ENCODE measurements at regions of chr1 and their contacts with region 1.

Region 1: DNA sequence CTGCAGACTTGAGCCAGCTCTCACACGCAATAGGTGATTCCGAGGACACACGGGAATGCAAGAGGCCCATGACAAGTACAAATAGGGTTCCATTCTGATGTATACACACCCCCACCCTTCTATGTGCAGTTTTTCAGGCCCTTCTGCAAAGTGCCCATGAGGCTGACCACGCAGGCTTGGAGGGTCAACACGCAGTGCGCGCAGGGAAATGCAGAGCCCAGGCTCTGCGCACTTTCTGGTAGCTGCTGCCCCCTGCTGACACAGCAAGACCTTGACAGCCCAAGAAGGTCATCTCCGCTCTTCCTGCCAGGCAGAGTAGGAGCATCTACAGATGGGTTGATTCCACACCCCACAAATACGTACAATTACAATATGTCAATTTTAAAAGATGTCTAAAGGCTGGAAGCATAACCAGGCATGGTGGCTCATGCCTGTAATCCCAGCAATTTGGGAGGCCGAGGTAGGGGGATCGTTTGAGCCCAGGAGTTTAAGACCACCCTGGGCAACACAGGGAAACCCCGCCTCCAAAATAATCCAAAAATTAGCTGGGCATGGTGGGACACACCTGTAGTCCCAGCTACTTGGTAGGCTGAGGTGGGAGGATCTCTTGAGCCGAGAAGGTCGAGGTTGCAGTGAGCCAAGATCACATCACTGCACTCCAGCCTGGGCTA is 18.5 kb downstream of the SH3BP5L start:
- DNase-seq: peak; percentile 29 to 64 (median 50)
- ATAC-seq: peak; percentile 75
- H3K4me3 ChIP-seq: no peak overlapping the region
- H3K4me3 Mint-ChIP-seq: no peak overlapping the region
- H3K27ac ChIP-seq: no peak overlapping the region
- H3K27ac Mint-ChIP-seq: peak overlapping the region in 5 of 9 donors; percentile 17 to 58 (median 29)
- H3K4me1 ChIP-seq: no peaks in the 10 kb centered on the region
- H3K4me1 Mint-ChIP-seq: peaks cover 7 to 23% (median 20%) of the 10 kb centered on the region in 7 donors
- H3K27me3 ChIP-seq: no peaks in the 10 kb centered on the region
- H3K27me3 Mint-ChIP-seq: peaks cover 0 to 9% (median 6%) of the 10 kb centered on the region in 5 donors

Region 2: GRCh38 chr1:247681288-247681897 is 1125.8 kb before region 1 on chr1:
- CTCF ChIA-PET with region 1: interaction called, 3 read pairs
- POLR2A ChIA-PET with region 1: no interaction called
- intact Hi-C with region 1: loop called in 1 of 2 experiments (anchors 5 kb)
- DNase-seq: peak in 6 of 9 donors; percentile 1 to 13 (median 10)
- ATAC-seq: no peak
- H3K4me3 ChIP-seq: no peak overlapping the region
- H3K4me3 Mint-ChIP-seq: no peak overlapping the region
- H3K27ac ChIP-seq: no peak overlapping the region
- H3K27ac Mint-ChIP-seq: no peak overlapping the region
- H3K4me1 ChIP-seq: no peaks in the 10 kb centered on the region
- H3K4me1 Mint-ChIP-seq: peaks cover 0 to 3% (median 0%) of the 10 kb centered on the region in 7 donors
- H3K27me3 ChIP-seq: no peaks in the 10 kb centered on the region
- H3K27me3 Mint-ChIP-seq: peaks cover 0 to 12% (median 7%) of the 10 kb centered on the region in 5 donors

Region 3: GRCh38 chr1:247936415-247936814 is 870.8 kb before region 1 on chr1:
- CTCF ChIA-PET with region 1: no interaction called
- POLR2A ChIA-PET with region 1: no interaction called
- intact Hi-C with region 1: loop called in 1 of 2 experiments (anchors 1 kb)
- DNase-seq: no peak
- ATAC-seq: no peak
- H3K4me3 ChIP-seq: no peak overlapping the region
- H3K4me3 Mint-ChIP-seq: peak overlapping the region in 3 of 10 donors; percentile 5 to 88 (median 43)
- H3K27ac ChIP-seq: no peak overlapping the region
- H3K27ac Mint-ChIP-seq: peak overlapping the region in 1 of 9 donors; percentile 41
- H3K4me1 ChIP-seq: no peaks in the 10 kb centered on the region
- H3K4me1 Mint-ChIP-seq: peaks cover 0 to 15% (median 0%) of the 10 kb centered on the region in 7 donors
- H3K27me3 ChIP-seq: no peaks in the 10 kb centered on the region
- H3K27me3 Mint-ChIP-seq: peaks cover 0 to 6% (median 2%) of the 10 kb centered on the region in 5 donors

Region 4: GRCh38 chr1:248404024-248404423 is 403.2 kb before region 1 on chr1:
- CTCF ChIA-PET with region 1: interaction called, 8 read pairs
- POLR2A ChIA-PET with region 1: no interaction called
- intact Hi-C with region 1: loop called (anchors 1 to 2 kb)
- DNase-seq: peak in 3 of 9 donors; percentile 6 to 32 (median 8)
- ATAC-seq: peak; percentile 91
- H3K4me3 ChIP-seq: no peak overlapping the region
- H3K4me3 Mint-ChIP-seq: no peak overlapping the region
- H3K27ac ChIP-seq: no peak overlapping the region
- H3K27ac Mint-ChIP-seq: peak overlapping the region in 4 of 9 donors; percentile 0 to 5 (median 0)
- H3K4me1 ChIP-seq: no peaks in the 10 kb centered on the region
- H3K4me1 Mint-ChIP-seq: peaks cover 0 to 16% (median 4%) of the 10 kb centered on the region in 7 donors
- H3K27me3 ChIP-seq: no peaks in the 10 kb centered on the region
- H3K27me3 Mint-ChIP-seq: no peaks in the 10 kb centered on the region

Region 5: DNA sequence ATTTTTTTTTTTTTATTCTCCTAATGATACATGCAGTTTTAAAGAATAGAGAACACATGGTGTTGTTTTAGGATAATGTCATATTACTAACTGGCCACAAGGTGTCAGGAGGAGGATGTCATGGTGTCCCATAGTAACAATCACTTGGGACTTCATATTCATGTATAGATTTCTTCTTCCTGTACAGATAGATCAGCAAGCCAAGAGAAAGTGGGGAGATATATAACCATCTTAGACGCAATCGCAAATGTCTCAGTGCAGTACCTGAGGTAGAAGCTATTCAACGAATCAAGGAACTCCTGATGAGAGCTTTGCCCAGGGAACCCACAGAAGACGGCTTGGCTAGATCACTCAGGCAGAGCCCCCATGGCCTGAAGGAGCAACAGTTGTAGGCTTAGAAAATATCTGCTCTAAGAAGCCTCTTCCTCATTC is 184.6 kb before region 1 on chr1:
- CTCF ChIA-PET with region 1: interaction called, 11 read pairs
- POLR2A ChIA-PET with region 1: no interaction called
- intact Hi-C with region 1: loop called (anchors 1 kb)
- DNase-seq: peak in 6 of 9 donors; percentile 9 to 35 (median 24)
- ATAC-seq: peak; percentile 87
- H3K4me3 ChIP-seq: no peak overlapping the region
- H3K4me3 Mint-ChIP-seq: no peak overlapping the region
- H3K27ac ChIP-seq: no peak overlapping the region
- H3K27ac Mint-ChIP-seq: peak overlapping the region in 1 of 9 donors; percentile 56
- H3K4me1 ChIP-seq: peaks cover 0 to 6% of the 10 kb centered on the region in 2 donors
- H3K4me1 Mint-ChIP-seq: peaks cover 1 to 13% (median 7%) of the 10 kb centered on the region in 7 donors
- H3K27me3 ChIP-seq: no peaks in the 10 kb centered on the region
- H3K27me3 Mint-ChIP-seq: peaks cover 0 to 3% (median 0%) of the 10 kb centered on the region in 5 donors

Region 6: DNA sequence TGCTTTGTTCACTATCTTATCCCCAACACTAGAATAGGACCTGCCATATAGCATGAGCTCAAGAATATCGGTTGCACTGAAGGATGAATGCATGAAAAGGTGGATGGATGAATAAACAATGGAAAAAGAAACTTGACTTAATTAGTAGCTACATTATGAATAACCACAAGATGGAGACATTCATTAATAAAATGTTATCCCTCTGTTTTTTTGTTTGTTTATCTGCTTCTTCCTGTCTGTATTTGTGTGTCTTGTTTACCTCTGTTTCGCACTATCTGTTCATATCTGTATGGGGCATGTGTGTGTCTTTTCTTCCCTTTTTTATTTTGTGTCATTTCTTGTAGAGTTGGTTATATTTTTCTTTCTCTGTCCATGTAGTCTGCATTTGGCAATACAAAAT is 103.5 kb before region 1 on chr1:
- CTCF ChIA-PET with region 1: no interaction called
- POLR2A ChIA-PET with region 1: no interaction called
- intact Hi-C with region 1: loop called in 1 of 2 experiments (anchors 1 kb)
- DNase-seq: no peak
- ATAC-seq: no peak
- H3K4me3 ChIP-seq: no peak overlapping the region
- H3K4me3 Mint-ChIP-seq: no peak overlapping the region
- H3K27ac ChIP-seq: no peak overlapping the region
- H3K27ac Mint-ChIP-seq: no peak overlapping the region
- H3K4me1 ChIP-seq: no peaks in the 10 kb centered on the region
- H3K4me1 Mint-ChIP-seq: peaks cover 0 to 2% (median 0%) of the 10 kb centered on the region in 7 donors
- H3K27me3 ChIP-seq: no peaks in the 10 kb centered on the region
- H3K27me3 Mint-ChIP-seq: peaks cover 0 to 12% (median 5%) of the 10 kb centered on the region in 5 donors